ENCODE measurements at regions of chr15 and their contacts with region 1.

Region 1: DNA sequence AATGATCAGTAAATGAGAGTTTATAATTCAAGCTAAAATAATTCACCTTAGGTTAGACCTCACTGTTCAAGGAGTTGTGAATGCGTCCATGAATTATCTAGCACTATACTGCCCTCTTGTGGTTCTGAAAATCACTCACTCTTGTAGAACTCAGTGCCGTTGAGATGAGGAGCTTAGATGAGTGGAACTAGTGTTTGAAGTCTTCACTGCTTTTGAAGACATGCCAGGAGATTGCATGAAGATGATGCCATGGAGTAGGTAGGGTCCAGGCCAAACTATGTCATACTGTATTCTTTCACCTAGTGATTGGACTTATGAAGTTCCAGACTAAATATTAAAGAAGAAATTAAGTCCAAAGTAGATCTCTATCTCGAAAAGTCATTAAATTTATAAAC is 28.8 kb downstream of the LYSMD4 start:
- DNase-seq: peak in 7 of 9 donors; percentile 62 to 81 (median 76)
- ATAC-seq: peak; percentile 92
- H3K4me3 ChIP-seq: no peak overlapping the region
- H3K4me3 Mint-ChIP-seq: no peak overlapping the region
- H3K27ac ChIP-seq: no peak overlapping the region
- H3K27ac Mint-ChIP-seq: peak overlapping the region in 8 of 9 donors; percentile 4 to 91 (median 16)
- H3K4me1 ChIP-seq: peaks cover 0 to 43% of the 10 kb centered on the region in 2 donors
- H3K4me1 Mint-ChIP-seq: peaks cover 24 to 69% (median 54%) of the 10 kb centered on the region in 7 donors
- H3K27me3 ChIP-seq: no peaks in the 10 kb centered on the region
- H3K27me3 Mint-ChIP-seq: no peaks in the 10 kb centered on the region

Region 2: DNA sequence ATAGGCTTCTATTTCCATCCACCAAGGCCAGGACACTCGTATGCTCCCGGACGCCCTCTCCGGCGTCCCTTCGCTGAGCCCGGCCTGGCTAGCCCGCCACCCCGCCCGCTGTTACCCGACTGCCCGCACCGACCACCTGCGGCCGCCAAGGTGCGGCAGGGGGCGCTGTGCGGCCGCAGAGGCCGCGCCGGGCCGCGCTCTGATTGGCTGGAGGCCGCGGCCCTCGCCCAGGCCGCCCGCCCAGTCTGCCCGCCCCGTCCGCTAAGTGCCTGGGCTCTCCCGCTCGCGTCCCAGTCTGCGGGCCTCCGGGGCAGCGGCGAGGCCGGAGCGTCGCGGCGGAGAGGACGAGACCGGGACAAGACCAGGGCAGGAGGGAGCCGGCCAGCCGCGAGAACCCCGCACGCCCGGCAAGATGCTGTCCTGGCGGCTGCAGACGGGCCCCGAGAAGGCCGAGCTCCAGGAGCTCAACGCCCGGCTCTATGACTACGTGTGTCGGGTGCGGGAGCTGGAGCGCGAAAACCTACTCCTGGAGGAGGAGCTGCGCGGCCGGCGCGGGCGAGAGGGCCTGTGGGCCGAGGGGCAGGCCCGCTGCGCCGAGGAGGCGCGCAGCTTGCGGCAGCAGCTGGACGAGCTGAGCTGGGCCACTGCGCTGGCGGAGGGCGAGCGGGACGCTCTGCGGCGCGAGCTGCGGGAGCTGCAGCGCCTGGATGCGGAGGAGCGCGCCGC is 599.5 kb before region 1 on chr15 and contains the start of gene SYNM:
- CTCF ChIA-PET with region 1: interaction called, 3 read pairs
- POLR2A ChIA-PET with region 1: no interaction called
- intact Hi-C with region 1: loop called (anchors 1 to 10 kb)
- DNase-seq: peak in 5 of 9 donors; percentile 7 to 72 (median 19)
- ATAC-seq: peak; percentile 60
- H3K4me3 ChIP-seq: peak within 1 kb of the TSS; percentile 27
- H3K4me3 Mint-ChIP-seq: peak within 1 kb of the TSS in 9 of 10 donors; percentile 23 to 79 (median 59)
- H3K27ac ChIP-seq: no peak within 1 kb of the TSS
- H3K27ac Mint-ChIP-seq: peak within 1 kb of the TSS in 2 of 9 donors; percentile 29 to 82
- H3K4me1 ChIP-seq: peaks cover 0 to 12% of the 10 kb centered on the region in 2 donors
- H3K4me1 Mint-ChIP-seq: peaks cover 0 to 26% (median 9%) of the 10 kb centered on the region in 7 donors
- H3K27me3 ChIP-seq: peaks cover 0 to 5% of the 10 kb centered on the region in 2 donors
- H3K27me3 Mint-ChIP-seq: peaks cover 36 to 59% (median 39%) of the 10 kb centered on the region in 5 donors
- total RNA-seq, gene SYNM: 0.53 to 6.0 (median 2.2) TPM

Region 3: DNA sequence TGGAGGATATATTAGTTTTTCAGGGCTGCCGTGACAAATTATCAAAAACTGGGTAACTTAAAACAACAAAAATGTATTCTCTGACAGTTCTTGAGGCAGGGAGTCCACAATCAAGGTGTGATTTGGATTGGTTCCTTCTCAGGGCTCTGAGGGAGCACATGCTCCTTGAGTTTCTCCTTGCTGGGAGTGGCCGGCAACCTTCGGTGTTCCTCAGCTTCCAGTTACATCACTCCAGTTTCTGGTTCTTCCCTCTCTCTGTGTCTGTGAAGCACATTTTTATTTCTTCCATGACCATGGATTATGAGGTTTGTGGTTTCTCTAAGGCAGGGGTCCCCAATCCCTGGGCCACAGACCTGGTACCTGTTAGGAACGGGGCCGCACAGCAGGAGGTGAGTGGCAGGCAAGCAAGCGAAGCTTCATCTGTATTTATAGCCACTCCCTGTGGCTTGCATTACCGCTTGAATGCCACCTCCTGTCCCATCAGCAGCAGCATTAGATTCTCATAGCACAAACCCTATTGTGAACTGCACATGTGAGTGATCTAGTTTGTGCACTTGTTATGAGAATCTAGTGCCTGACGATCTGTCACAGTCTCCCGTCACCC is 428.8 kb before region 1 on chr15:
- CTCF ChIA-PET with region 1: interaction called, 43 read pairs
- POLR2A ChIA-PET with region 1: interaction called, 5 read pairs
- intact Hi-C with region 1: loop called (anchors 1 kb)
- DNase-seq: no peak
- ATAC-seq: no peak
- H3K4me3 ChIP-seq: no peak overlapping the region
- H3K4me3 Mint-ChIP-seq: no peak overlapping the region
- H3K27ac ChIP-seq: no peak overlapping the region
- H3K27ac Mint-ChIP-seq: peak overlapping the region in 1 of 9 donors; percentile 59
- H3K4me1 ChIP-seq: no peaks in the 10 kb centered on the region
- H3K4me1 Mint-ChIP-seq: peaks cover 7 to 35% (median 19%) of the 10 kb centered on the region in 7 donors
- H3K27me3 ChIP-seq: no peaks in the 10 kb centered on the region
- H3K27me3 Mint-ChIP-seq: no peaks in the 10 kb centered on the region

Region 4: GRCh38 chr15:99343881-99344551 is 360.4 kb before region 1 on chr15:
- CTCF ChIA-PET with region 1: interaction called, 51 read pairs
- POLR2A ChIA-PET with region 1: interaction called, 13 read pairs
- intact Hi-C with region 1: loop called (anchors 1 kb)
- DNase-seq: peak; percentile 9 to 68 (median 57)
- ATAC-seq: peak; percentile 73
- H3K4me3 ChIP-seq: no peak overlapping the region
- H3K4me3 Mint-ChIP-seq: no peak overlapping the region
- H3K27ac ChIP-seq: no peak overlapping the region
- H3K27ac Mint-ChIP-seq: peak overlapping the region in 2 of 9 donors; percentile 8 to 61
- H3K4me1 ChIP-seq: no peaks in the 10 kb centered on the region
- H3K4me1 Mint-ChIP-seq: peaks cover 0 to 8% (median 6%) of the 10 kb centered on the region in 7 donors
- H3K27me3 ChIP-seq: no peaks in the 10 kb centered on the region
- H3K27me3 Mint-ChIP-seq: no peaks in the 10 kb centered on the region

Region 5: DNA sequence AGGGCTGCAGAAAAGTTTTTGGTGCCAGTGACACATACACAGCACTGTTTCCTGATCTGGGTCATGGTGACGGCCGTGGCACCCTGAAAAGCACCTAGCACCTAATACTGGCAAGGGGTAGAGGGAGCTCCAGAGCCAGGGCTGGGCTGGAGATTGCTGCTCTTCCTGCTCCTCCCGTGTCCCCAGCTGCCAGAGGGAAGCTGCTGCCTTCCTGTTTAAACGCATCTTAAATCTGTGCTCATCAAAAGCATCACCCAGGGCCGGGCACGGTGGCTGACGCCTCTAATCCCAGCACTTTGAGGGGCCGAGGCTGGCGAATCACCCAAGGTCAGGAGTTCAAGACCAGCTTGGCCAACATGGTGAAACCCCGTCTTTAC is 295.4 kb before region 1 on chr15:
- CTCF ChIA-PET with region 1: interaction called, 16 read pairs
- POLR2A ChIA-PET with region 1: interaction called, 5 read pairs
- intact Hi-C with region 1: loop called (anchors 1 to 5 kb)
- DNase-seq: peak in 6 of 9 donors; percentile 24 to 57 (median 42)
- ATAC-seq: peak; percentile 71
- H3K4me3 ChIP-seq: no peak overlapping the region
- H3K4me3 Mint-ChIP-seq: peak overlapping the region in 3 of 10 donors; percentile 27 to 66 (median 28)
- H3K27ac ChIP-seq: no peak overlapping the region
- H3K27ac Mint-ChIP-seq: peak overlapping the region in 7 of 9 donors; percentile 18 to 91 (median 32)
- H3K4me1 ChIP-seq: peaks cover 0 to 17% of the 10 kb centered on the region in 2 donors
- H3K4me1 Mint-ChIP-seq: peaks cover 0 to 28% (median 22%) of the 10 kb centered on the region in 7 donors
- H3K27me3 ChIP-seq: no peaks in the 10 kb centered on the region
- H3K27me3 Mint-ChIP-seq: peaks cover 0 to 3% (median 0%) of the 10 kb centered on the region in 5 donors

Region 6: DNA sequence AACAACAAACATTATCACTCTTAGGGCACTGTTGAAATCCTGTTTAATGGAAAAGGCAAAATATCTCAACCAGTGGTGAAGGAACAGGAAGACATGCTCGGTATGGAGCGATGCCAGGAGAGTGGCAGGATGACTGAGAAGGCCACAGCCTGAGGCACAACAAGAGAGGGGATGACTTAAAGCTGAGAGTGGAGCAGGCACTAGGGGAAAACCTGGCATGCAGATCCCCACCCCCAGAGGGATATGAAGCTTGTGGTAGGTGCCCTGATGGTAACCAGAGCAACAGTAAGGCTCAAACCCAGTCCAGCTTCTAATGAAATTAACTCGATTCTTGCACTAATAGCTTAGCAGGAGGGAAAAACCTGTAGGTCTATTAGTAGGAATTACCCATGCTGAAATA is 11.6 kb before region 1 on chr15:
- CTCF ChIA-PET with region 1: interaction called, 13 read pairs
- POLR2A ChIA-PET with region 1: no interaction called
- intact Hi-C with region 1: no loop called
- DNase-seq: no peak
- ATAC-seq: no peak
- H3K4me3 ChIP-seq: no peak overlapping the region
- H3K4me3 Mint-ChIP-seq: no peak overlapping the region
- H3K27ac ChIP-seq: no peak overlapping the region
- H3K27ac Mint-ChIP-seq: peak overlapping the region in 1 of 9 donors; percentile 7
- H3K4me1 ChIP-seq: no peaks in the 10 kb centered on the region
- H3K4me1 Mint-ChIP-seq: peaks cover 0 to 4% (median 0%) of the 10 kb centered on the region in 7 donors
- H3K27me3 ChIP-seq: no peaks in the 10 kb centered on the region
- H3K27me3 Mint-ChIP-seq: no peaks in the 10 kb centered on the region

Region 7: DNA sequence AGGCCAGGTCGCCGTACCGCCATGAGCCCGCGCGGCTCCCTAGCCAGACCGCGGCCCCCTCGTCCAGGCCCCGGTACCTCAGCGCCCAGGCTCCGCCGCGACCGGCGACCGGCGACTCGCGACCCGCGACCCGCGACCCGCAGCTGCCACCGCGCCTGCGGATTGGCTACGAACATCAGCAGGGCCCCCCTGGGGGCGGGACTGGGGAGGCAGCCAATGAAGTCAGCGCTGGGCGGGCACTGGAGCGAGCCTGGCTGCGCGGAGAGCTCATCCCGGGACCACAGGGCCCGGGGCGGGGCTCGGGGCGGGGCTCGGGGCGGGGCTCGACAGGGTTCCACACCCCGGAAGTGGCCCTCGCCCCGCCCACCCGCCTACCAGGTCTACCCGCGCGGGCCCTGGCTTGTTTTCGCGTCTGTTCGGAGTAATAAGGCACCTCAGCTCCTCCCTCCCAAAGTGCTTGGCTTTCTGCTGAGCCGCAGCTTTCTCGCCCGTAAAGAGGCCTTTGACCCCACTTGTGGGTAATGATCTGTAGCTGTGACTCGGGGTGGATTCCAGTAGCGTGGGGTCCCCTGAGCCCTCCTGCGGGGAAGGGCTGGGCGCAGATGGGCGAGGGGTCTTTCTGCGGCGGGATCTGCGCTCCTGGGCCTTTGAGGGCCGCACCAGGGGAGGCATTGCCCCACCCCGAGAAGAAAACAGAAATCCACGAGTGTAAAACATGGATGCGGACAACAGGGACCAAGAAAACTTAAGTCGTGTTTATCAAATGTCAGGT is 29.0 kb after region 1 on chr15 and contains the start of gene LYSMD4:
- CTCF ChIA-PET with region 1: interaction called, 13 read pairs
- POLR2A ChIA-PET with region 1: interaction called, 8 read pairs
- intact Hi-C with region 1: loop called (anchors 1 kb)
- DNase-seq: peak; percentile 93 to 98 (median 96)
- ATAC-seq: peak; percentile 100
- H3K4me3 ChIP-seq: peak within 1 kb of the TSS; percentile 70
- H3K4me3 Mint-ChIP-seq: peak within 1 kb of the TSS; percentile 81 to 92 (median 88)
- H3K27ac ChIP-seq: peak within 1 kb of the TSS; percentile 84
- H3K27ac Mint-ChIP-seq: peak within 1 kb of the TSS; percentile 82 to 97 (median 95)
- H3K4me1 ChIP-seq: peaks cover 10 to 13% of the 10 kb centered on the region in 2 donors
- H3K4me1 Mint-ChIP-seq: peaks cover 5 to 36% (median 27%) of the 10 kb centered on the region in 7 donors
- H3K27me3 ChIP-seq: no peaks in the 10 kb centered on the region
- H3K27me3 Mint-ChIP-seq: no peaks in the 10 kb centered on the region
- total RNA-seq, gene LYSMD4: 7.9 to 22.4 (median 15.4) TPM

Measured in naive thymus-derived CD4-positive, alpha-beta T cell (primary cell).